A549 (cell line): ENCODE measurements at regions of chr3 and their contacts with region 1.

Region 1: GRCh38 chr3:139329345-139329850 is 14.4 kb upstream of the MRPS22 start:
- DNase-seq: peak; percentile 82 to 84
- ATAC-seq: peak; percentile 99 to 100
- H3K4me3 ChIP-seq: peak overlapping the region; percentile 34; the same call in 2 of the 3 replicates
- H3K27ac ChIP-seq: peak overlapping the region; percentile 67 to 81
- H3K4me1 ChIP-seq: peaks cover 5% of the 10 kb centered on the region; the same call in 2 of the 3 replicates
- CTCF ChIP-seq: peak; percentile 98
- EP300 ChIP-seq: no peak
- POLR2A ChIP-seq: no peak
- RAD21 ChIP-seq: peak; percentile 97 to 98

Region 2: DNA sequence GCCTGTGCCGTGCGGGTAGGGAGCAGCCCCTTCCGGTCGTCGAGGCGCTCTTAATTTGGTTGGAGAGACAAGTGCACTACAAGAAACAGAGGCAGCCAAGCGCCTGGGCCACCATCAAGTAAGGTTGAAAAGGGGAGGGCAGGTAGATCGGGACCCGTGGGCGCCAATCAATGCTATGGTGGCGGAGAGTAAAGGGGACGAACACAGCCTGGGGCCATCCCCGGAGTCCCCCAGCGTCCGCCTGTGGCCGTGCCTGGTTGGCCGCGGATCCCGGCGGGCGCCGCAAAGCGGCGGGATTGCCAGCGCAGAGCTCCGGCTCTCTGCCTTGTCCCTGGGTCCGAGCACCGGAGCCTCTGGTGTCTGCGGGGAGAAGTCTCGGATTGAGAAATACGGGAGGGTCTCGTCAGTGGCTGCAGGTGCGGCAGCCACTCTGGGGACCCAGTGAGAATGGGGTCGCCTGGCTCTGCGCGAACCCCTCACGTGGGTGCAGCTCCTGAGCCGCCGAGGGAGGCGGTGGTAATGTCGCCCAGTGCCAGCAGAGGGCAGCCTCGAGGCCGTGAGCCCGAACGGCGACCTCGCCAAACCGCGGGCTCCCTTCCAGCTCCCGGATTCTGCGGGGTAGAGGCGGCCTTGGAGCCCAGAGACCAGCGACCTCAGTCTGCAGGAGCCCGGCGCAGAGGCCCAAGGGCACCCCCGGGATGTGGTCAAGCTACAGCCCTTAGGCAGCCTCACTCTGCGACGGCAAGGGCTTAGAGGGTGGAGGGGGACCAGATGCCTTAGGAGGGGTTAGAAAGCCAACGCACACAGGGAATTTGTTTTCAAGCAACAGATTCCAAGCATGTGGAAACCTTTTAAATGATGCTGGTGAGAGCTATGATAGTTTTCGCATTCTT is 393.3 kb before region 1 on chr3:
- CTCF ChIA-PET with region 1: interaction called, 15 read pairs
- POLR2A ChIA-PET with region 1: no interaction called
- DNase-seq: peak; percentile 64 to 75
- ATAC-seq: peak; percentile 91
- H3K4me3 ChIP-seq: peak overlapping the region; percentile 45
- H3K27ac ChIP-seq: peak overlapping the region; percentile 69 to 93
- H3K4me1 ChIP-seq: no peaks in the 10 kb centered on the region
- CTCF ChIP-seq: peak; percentile 62
- EP300 ChIP-seq: no peak
- POLR2A ChIP-seq: peak; percentile 15; the same call in 1 of the 2 replicates
- RAD21 ChIP-seq: peak; percentile 45 to 47; a peak in 4 of 5 replicates

Region 3: GRCh38 chr3:139101396-139101795 is 228.0 kb before region 1 on chr3:
- CTCF ChIA-PET with region 1: interaction called, 27 read pairs
- POLR2A ChIA-PET with region 1: no interaction called
- DNase-seq: no peak
- ATAC-seq: no peak
- H3K4me3 ChIP-seq: no peak overlapping the region
- H3K27ac ChIP-seq: no peak overlapping the region
- H3K4me1 ChIP-seq: no peaks in the 10 kb centered on the region
- CTCF ChIP-seq: no peak
- EP300 ChIP-seq: no peak
- POLR2A ChIP-seq: no peak
- RAD21 ChIP-seq: no peak

Region 4: DNA sequence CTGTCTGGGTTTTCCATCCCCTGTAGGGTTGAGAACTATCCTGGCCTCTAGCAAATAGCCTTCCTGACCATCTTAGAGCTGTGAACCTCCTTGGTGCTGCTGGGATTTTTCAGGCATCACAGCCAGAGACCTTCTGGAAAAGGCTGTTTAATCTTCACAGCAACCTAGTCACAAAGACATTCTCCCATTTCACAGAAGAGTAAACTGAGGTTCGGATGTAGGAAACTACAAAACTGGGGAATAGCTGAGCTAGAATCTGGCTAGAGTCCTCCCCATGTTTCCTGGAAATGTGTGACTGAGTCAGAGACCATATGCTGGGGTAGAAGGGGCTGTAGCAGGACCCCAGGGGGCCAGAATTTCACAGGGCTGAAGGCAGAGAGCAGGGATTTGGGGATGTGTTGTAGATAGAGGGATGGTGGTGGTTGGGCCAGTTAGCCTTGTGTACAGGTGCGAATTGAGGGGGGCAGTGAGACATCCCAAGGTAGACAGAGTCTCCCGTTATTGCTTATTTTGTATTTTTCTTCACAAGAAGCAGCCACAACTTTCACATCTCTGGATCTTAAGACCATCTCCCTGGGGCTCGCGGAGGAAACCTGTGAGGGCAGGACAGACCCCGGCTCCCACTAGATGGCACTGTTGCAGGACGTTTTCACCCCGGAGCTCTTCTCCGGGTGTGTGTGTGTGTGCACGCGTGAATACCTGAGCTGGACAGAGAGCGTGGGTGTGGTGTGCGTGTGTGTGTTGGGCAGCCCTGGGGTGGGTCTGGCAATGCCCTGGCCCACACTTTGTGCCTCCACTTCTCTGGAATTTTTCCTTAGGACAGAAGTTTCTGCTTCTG is 217.8 kb before region 1 on chr3:
- CTCF ChIA-PET with region 1: interaction called, 87 read pairs
- POLR2A ChIA-PET with region 1: no interaction called
- DNase-seq: peak; percentile 43 to 50
- ATAC-seq: peak; percentile 94 to 95
- H3K4me3 ChIP-seq: no peak overlapping the region
- H3K27ac ChIP-seq: peak overlapping the region in 1 of 2 experiments; percentile 47; a peak in 2 of 6 replicates
- H3K4me1 ChIP-seq: no peaks in the 10 kb centered on the region
- CTCF ChIP-seq: peak; percentile 54
- EP300 ChIP-seq: no peak
- POLR2A ChIP-seq: no peak
- RAD21 ChIP-seq: peak; percentile 76

Region 5: DNA sequence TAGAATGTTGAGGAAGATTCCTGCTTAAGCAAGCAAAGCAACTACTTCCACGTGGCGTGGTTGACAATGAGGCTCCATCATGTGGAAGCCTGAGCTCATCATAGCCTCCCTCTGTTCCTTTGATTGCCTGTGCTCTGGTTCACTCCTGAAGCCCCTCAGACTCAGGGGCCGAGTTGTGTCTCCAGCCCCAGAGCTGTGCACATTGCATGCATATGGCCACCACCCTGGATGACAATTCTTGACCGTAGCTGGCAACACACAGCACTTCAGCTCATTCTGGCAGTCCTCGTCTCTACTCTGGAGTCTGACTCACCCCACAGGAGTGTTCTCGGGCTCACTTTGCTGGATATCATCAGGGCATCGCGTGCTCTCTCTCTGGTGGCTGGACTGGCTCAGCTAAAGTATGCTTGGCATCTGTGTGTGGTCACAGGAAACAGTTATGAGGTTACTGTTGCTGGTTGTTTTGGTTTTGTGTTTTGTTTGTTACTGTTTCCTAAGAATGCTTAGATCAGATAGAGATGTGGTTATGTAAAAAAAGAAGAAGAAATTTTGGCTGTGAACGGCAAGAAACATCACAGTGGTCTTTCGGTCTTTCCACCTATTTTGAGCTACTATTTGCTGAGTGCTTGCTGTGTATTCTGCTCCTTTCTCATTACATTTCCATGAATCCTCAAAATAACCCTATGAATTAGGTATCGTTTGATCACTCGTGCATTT is 27.2 kb before region 1 on chr3:
- CTCF ChIA-PET with region 1: interaction called, 21 read pairs
- POLR2A ChIA-PET with region 1: no interaction called
- DNase-seq: peak; percentile 71 to 77
- ATAC-seq: peak; percentile 96 to 98
- H3K4me3 ChIP-seq: no peak overlapping the region
- H3K27ac ChIP-seq: peak overlapping the region; percentile 71 to 91
- H3K4me1 ChIP-seq: peaks cover 47% of the 10 kb centered on the region
- CTCF ChIP-seq: no peak
- EP300 ChIP-seq: peak in 1 of 2 experiments; percentile 48; a peak in 2 of 5 replicates
- POLR2A ChIP-seq: no peak
- RAD21 ChIP-seq: no peak

Region 6: GRCh38 chr3:139310474-139310933 is 18.9 kb before region 1 on chr3:
- CTCF ChIA-PET with region 1: interaction called, 44 read pairs
- POLR2A ChIA-PET with region 1: no interaction called
- DNase-seq: peak in 1 of 2 experiments; percentile 32
- ATAC-seq: peak in 1 of 2 experiments; percentile 38; a peak in 2 of 6 replicates
- H3K4me3 ChIP-seq: no peak overlapping the region
- H3K27ac ChIP-seq: peak overlapping the region; percentile 88 to 92
- H3K4me1 ChIP-seq: peaks cover 59% of the 10 kb centered on the region
- CTCF ChIP-seq: no peak
- EP300 ChIP-seq: no peak
- POLR2A ChIP-seq: no peak
- RAD21 ChIP-seq: no peak